PC-9 (cell line): ENCODE measurements at regions of chr5 and their contacts with region 1.

Region 1: DNA sequence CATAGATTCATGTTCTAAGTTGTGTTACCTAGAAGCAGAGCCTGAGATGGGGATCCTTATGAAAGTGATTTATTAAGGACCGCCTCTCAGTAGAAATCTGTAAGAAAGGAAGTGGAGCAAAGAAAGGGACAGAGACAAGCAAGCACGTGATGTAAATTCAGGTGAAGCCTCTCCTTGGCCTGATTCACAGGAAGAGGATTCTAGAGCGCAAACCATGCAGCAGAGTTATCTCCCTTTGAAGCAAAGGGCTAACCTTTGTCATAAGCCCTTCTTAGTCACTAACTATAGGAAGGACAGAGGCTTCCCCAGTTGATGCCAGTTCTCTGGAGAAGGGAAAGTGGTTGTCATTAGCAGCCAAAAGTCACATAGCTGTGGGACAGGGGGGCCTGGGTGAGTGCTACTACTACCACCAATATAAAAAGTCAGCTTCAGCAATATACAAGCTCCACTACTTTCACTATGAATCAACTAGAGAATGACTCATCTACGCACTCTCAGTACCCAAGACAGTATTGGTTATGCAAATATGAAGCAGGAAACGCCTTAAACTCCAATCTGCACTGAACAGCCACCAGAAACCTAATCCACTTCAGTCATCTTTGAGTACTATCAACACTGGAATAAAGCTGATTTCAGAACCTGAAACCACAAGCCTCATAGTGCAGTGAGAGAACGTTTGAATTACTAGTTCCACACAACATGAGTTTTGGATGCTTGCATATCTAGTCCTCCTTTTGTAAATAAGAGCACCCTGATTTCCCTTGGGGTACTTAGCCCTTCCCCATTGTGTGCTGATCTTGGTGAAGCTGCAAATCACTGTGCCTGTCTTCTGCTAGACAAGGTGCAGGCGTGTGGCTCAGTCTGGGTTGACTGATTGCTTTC is 162.7 kb downstream of the ZNF608 start:
- DNase-seq: peak; percentile 16 to 77
- H3K4me3 ChIP-seq: no peak overlapping the region
- H3K27ac ChIP-seq: peak overlapping the region; percentile 28
- H3K4me1 ChIP-seq: peaks cover 12% of the 10 kb centered on the region
- H3K27me3 ChIP-seq: no peaks in the 10 kb centered on the region
- CTCF ChIP-seq: no peak

Region 2: GRCh38 chr5:124639095-124639665 is 55.5 kb after region 1 on chr5:
- CTCF ChIA-PET with region 1: no interaction called
- POLR2A ChIA-PET with region 1: interaction called, 14 read pairs
- intact Hi-C with region 1: no loop called
- DNase-seq: no peak
- H3K4me3 ChIP-seq: no peak overlapping the region
- H3K27ac ChIP-seq: no peak overlapping the region
- H3K4me1 ChIP-seq: peaks cover 16% of the 10 kb centered on the region
- H3K27me3 ChIP-seq: no peaks in the 10 kb centered on the region
- CTCF ChIP-seq: no peak

Region 3: GRCh38 chr5:126100767-126101166 is 1517.1 kb after region 1 on chr5:
- CTCF ChIA-PET with region 1: no interaction called
- POLR2A ChIA-PET with region 1: no interaction called
- intact Hi-C with region 1: no loop called
- DNase-seq: no peak
- H3K4me3 ChIP-seq: no peak overlapping the region
- H3K27ac ChIP-seq: no peak overlapping the region
- H3K4me1 ChIP-seq: no peaks in the 10 kb centered on the region
- H3K27me3 ChIP-seq: no peaks in the 10 kb centered on the region
- CTCF ChIP-seq: peak; percentile 49; the same call in 1 of the 2 replicates